ENCODE measurements at regions of chr19 and their contacts with region 1.

Region 1: DNA sequence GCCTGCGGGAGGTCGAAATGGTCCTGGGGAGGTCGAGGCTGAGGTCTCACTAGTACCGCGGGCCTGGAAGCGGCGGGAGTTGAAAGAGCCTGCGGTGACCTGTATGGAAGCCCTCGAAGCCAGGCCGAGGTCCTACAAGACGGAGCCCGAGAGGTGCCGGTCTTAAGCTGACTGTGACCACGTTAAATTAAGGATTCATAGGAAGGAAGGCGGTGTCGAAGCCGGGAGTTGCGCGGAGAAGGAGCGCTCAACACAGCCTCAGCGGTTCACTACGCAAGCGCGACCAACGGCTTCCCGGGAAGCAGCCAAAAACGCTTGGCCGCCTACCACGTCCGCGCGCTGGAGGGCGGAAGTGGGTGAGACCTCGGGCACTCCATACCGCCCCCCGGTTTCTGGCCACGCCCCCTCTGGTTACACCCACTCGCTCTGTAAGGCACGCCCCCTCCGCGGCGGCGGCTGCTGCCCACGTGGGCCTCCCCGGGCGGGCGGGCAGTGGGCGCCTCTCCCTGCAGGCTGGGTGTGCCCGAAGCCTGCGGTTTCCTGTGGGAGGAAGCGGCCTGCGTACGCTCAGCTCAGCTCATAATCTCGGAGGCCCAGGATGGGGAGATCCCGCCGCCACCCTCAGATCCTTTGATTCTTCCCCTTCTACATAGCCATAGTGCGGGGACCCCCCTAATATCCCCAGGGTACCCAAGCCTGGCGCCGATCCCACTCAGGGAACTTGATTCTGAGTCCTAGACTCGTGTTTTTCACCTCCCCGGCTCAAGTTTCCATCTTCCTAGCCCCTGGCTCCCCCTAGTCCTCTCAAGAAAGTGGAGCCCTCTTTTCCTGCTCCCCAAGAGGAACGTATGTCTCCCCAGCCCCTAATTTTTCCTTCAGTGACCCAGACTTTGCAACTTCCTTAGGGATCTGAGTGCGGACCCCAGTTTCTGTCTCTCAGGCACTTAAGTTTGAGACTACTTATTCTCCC is 3.4 kb upstream of the EMP3 start:
- DNase-seq: peak; percentile 98
- H3K4me3 ChIP-seq: peak overlapping the region; percentile 41 to 58
- H3K27ac ChIP-seq: peak overlapping the region; percentile 98 to 99
- H3K4me1 ChIP-seq: peaks cover 6% of the 10 kb centered on the region
- H3K27me3 ChIP-seq: no peaks in the 10 kb centered on the region
- CTCF ChIP-seq: peak in 2 of 4 experiments; percentile 37 to 40
- POLR2A ChIP-seq: peak; percentile 77

Region 2: DNA sequence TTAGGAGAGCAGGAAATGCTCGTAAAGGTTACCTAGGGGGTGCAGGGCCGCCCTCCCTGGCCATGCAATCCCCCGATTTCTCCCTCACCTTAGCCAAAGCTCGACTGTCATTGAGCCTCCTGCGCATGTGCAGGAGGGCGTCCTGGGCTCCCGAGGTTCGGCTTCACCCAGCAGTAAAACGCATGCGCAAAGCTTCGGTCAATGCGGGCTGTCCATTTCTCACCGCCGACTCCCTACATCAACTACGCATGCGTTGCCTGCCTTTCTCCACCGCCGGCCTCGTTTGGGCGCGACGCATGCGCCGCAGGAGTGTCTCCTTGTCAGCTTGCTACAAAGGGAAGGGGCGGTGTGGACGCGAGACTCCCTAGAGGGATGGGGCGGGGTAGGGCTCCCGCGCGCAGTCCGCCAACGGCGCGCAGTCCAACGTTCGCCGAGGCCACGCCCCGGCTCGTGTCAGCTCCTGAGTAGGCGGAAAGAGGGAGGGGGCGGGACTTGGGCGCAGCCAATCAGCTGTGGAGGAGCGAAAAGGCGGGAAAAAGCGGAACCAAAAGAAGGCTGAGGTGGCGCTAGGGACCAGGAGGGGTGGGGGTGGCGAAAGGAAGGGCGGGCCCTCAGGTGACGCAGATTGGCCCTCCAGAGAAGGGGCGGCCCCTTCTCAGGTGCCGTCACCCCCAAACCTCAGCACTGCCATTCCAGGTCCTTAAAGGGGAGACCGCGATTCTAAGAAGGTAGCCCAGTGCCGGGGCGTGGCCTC is 42.1 kb after region 1 on chr19 and contains the starts of genes SYNGR4 and TMEM143:
- intact Hi-C with region 1: loop called (anchors 2 kb)
- DNase-seq: peak; percentile 98
- H3K4me3 ChIP-seq: peak within 1 kb of the TSS; percentile 40 to 43
- H3K27ac ChIP-seq: peak within 1 kb of the TSS; percentile 90 to 92
- H3K4me1 ChIP-seq: peaks cover 3% of the 10 kb centered on the region
- H3K27me3 ChIP-seq: no peaks in the 10 kb centered on the region
- CTCF ChIP-seq: peak in 1 of 4 experiments; percentile 30
- POLR2A ChIP-seq: peak; percentile 43
- total RNA-seq, gene SYNGR4: 2.8 TPM in 1 of 2 donors, not detected in the other
- total RNA-seq, gene TMEM143: 4.6 to 14.9 TPM

Region 3: GRCh38 chr19:48391107-48391986 is 69.4 kb after region 1 on chr19 and contains the start of gene KDELR1:
- intact Hi-C with region 1: loop called (anchors 2 kb)
- DNase-seq: peak; percentile 77
- H3K4me3 ChIP-seq: peak within 1 kb of the TSS; percentile 81 to 89
- H3K27ac ChIP-seq: peak within 1 kb of the TSS; percentile 87 to 91
- H3K4me1 ChIP-seq: no peaks in the 10 kb centered on the region
- H3K27me3 ChIP-seq: peaks cover 2% of the 10 kb centered on the region
- CTCF ChIP-seq: peak; percentile 79 to 93 (median 86)
- POLR2A ChIP-seq: peak; percentile 83
- total RNA-seq, gene KDELR1: 153 to 179 TPM